Activated naive CD4-positive, alpha-beta T cell treated with anti-CD3 and anti-CD28 coated beads for 36 hours (primary cell): ENCODE measurements at regions of chr12 and their contacts with region 1.

Region 1: DNA sequence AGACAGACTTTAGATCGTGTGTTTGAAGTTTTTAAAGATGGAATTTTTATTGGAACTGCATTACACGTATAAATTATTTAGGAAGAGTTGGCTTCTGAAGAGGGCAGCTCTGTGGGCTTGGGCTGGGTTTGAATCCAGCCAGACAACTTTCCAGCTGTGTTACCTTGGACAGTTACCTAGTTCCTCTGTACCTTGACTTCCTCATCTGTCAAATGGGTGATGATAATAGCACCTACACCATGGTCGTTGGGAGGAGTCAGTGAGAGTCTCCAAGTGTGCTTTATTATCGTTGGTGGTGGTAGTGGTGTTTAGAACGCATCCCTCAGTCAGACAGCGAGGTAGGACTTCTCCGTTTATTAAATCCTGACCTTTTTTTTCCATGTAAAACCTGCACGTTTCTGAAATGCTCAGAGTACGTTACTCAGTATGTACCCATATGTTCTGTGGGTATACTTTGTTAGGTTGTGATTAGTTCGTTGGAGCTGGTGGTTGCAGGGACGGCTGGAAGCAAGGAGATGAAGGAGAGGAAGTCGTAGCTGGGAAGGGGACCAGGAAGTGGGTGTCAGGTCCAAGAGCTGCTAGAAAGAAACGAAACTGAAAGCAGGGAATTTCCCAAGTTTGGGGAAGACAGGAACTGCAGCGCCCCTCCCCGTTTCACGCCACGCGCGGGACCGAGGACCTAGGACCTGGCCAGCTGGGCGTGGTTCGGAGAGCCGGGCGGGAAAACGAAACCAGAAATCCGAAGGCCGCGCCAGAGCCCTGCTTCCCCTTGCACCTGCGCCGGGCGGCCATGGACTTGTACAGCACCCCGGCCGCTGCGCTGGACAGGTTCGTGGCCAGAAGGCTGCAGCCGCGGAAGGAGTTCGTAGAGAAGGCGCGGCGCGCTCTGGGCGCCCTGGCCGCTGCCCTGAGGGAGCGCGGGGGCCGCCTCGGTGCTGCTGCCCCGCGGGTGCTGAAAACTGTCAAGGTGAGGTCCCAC is at the start of gene OAS3:
- DNase-seq: peak; percentile 61
- H3K4me3 Mint-ChIP-seq: peak within 1 kb of the TSS; percentile 80
- H3K27ac Mint-ChIP-seq: peak within 1 kb of the TSS; percentile 67
- H3K4me1 Mint-ChIP-seq: peaks cover 31% of the 10 kb centered on the region
- H3K27me3 Mint-ChIP-seq: no peaks in the 10 kb centered on the region
- total RNA-seq, gene OAS3: 26.1 to 28.0 TPM

Region 2: GRCh38 chr12:112906712-112907414 is 31.2 kb before region 1 on chr12 and contains the start of gene OAS1:
- CTCF ChIA-PET with region 1: interaction called, 5 read pairs
- intact Hi-C with region 1: loop called (anchors 2 kb)
- DNase-seq: peak; percentile 59
- H3K4me3 Mint-ChIP-seq: peak within 1 kb of the TSS; percentile 87
- H3K27ac Mint-ChIP-seq: peak within 1 kb of the TSS; percentile 81
- H3K4me1 Mint-ChIP-seq: peaks cover 62% of the 10 kb centered on the region
- H3K27me3 Mint-ChIP-seq: no peaks in the 10 kb centered on the region
- total RNA-seq, gene OAS1: 41.6 to 41.7 TPM